GM12878 (cell line): ENCODE measurements at regions of chr2 and their contacts with region 1.

Region 1: GRCh38 chr2:65031341-65032018 is 24.7 kb upstream of the CEP68 start:
- DNase-seq: no peak
- ATAC-seq: peak; percentile 41
- H3K4me3 ChIP-seq: peak overlapping the region; percentile 46
- H3K27ac ChIP-seq: peak overlapping the region; percentile 73
- H3K4me1 ChIP-seq: peaks cover 51% of the 10 kb centered on the region
- H3K27me3 ChIP-seq: no peaks in the 10 kb centered on the region
- CTCF ChIP-seq: no peak
- EP300 ChIP-seq: no peak
- POLR2A ChIP-seq: no peak
- RAD21 ChIP-seq: no peak

Region 2: DNA sequence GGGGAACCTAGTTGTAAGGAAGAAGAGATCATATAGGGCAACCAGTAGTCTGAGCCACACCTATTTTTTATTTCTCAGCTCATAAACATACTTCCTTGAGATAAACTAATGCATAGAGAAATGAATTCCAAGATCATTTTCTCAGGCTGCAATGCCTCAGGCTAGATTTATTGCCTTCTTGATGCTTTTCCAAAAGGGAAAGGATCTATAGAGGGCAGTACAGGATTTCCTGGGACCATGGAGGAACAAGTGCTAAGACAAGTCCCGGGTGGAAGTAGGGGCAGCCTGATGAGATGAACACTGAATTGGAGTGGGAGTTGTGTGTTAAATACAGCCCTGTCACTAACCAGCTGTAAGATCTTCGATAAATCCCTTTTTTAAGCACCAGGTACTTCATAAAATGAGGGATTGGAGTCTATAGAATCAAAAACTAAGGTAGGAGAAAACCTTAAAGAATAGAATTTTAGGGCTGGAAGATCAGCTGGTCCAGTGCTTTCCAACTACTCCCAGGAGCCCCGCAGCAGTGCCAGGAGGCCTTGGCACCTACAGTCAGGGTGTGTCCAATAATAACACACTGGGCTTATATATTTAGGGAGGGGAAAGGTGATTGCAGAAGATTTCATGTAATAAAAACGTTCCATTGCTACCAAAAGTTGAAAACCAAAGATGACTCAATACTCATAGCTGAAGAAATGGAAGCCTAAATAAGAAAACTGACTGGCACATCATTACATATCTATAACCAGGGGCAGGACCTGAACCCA is 435.9 kb before region 1 on chr2:
- CTCF ChIA-PET with region 1: no interaction called
- POLR2A ChIA-PET with region 1: interaction called, 3 read pairs
- RAD21 ChIA-PET with region 1: interaction called, 3 read pairs
- SMC1A ChIA-PET with region 1: no interaction called
- in situ Hi-C with region 1: loop called (anchors 10 kb)
- intact Hi-C with region 1: no loop called
- DNase-seq: no peak
- ATAC-seq: no peak
- H3K4me3 ChIP-seq: no peak overlapping the region
- H3K27ac ChIP-seq: no peak overlapping the region
- H3K4me1 ChIP-seq: peaks cover 6% of the 10 kb centered on the region; the same call in 1 of the 2 replicates
- H3K27me3 ChIP-seq: no peaks in the 10 kb centered on the region
- CTCF ChIP-seq: peak in 1 of 3 experiments; percentile 34; a peak in 2 of 6 replicates
- EP300 ChIP-seq: no peak
- POLR2A ChIP-seq: no peak
- RAD21 ChIP-seq: no peak; the same call in 1 of the 2 replicates

Region 3: DNA sequence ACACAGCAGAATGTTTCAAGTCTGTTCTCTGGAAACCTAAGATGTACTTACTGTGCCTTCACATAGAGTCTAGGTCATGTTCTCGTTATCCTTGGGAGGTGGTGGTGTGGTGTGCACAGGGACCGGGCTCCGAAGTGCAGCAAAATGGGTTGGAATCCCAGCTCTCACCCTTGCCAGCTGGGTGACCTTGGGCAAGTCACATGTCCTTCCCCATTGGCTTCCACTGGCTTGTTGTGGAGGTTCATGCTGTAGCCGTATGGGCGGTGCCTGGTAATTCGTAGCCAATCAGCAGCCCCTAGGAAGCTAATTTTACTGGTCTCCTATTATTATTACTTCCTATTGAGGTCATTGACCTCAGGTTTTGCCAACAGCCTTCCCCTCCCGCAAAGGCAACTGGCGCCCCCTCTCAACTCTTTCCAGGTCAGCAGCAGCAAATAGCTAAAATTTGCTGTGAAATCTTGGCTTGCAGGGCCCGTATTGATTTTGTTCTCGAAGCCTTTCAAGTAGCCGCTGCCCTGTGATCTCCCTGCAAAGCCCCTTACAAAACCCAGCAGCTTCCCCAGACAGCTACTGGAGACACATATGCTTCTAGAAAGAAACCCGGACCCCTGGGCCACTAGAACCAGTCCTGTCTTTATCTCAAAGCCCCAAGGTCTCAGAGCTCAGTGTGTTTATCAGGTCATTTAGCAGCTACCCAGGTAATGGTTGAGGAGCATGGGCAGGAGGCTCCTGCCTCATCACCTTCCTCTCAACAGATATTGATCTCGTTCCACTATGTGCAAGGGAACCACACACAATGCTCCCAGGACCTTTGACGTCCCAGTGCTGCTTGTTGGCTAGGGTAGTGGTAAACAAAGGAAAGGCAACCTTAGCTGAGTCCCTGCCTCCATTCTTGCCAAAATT is 108.7 kb before region 1 on chr2:
- CTCF ChIA-PET with region 1: interaction called, 119 read pairs
- POLR2A ChIA-PET with region 1: interaction called, 45 read pairs
- RAD21 ChIA-PET with region 1: interaction called, 95 read pairs
- SMC1A ChIA-PET with region 1: interaction called, 178 read pairs
- in situ Hi-C with region 1: loop called (anchors 5 kb)
- intact Hi-C with region 1: loop called (anchors 1 kb)
- DNase-seq: no peak
- ATAC-seq: no peak
- H3K4me3 ChIP-seq: peak overlapping the region; percentile 23; the same call in 1 of the 2 replicates
- H3K27ac ChIP-seq: peak overlapping the region; percentile 23; the same call in 1 of the 2 replicates
- H3K4me1 ChIP-seq: peaks cover 42% of the 10 kb centered on the region
- H3K27me3 ChIP-seq: no peaks in the 10 kb centered on the region
- CTCF ChIP-seq: no peak
- EP300 ChIP-seq: no peak
- POLR2A ChIP-seq: no peak
- RAD21 ChIP-seq: peak; percentile 30; the same call in 1 of the 2 replicates

Region 4: DNA sequence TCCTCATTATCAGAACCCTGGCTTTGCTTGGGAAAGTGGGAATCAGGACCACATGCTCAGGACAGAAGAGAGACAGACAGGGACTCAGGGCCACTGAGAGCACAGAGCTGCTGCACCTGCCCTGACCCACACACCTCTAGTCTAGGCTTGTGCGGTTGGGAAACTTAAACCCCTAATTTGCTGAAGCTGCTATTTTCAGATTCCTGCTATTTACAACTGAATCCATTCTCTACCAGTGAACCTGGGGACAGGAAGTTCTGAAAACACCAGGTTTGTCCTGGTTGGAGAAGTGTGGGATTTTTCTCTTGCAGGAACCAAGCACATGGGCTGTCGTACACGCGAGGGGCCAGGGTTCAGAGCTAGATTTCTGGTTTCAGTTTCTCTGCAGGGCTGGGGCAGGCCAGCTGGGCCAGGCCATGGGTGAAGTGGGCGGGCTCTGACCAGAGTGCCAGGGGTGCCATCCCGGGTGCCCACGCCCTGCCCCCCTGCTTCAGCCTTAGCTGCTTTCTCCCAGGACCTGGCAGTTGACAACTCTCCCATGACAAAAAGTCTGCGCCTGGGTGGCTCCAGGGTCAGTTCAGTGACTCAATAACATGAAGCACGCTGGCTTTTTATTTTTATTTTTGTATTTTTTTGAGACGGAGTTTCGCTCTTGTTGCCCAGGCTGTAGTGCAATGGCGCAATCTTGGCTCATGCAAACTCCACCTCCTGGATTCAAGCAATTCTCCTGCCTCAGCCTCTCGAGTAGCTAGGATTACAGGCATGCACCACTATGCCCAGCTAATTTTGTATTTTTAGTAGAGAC is 93.6 kb before region 1 on chr2:
- CTCF ChIA-PET with region 1: interaction called, 16 read pairs
- POLR2A ChIA-PET with region 1: interaction called, 3 read pairs
- RAD21 ChIA-PET with region 1: interaction called, 26 read pairs
- SMC1A ChIA-PET with region 1: interaction called, 19 read pairs
- in situ Hi-C with region 1: no loop called
- intact Hi-C with region 1: loop called (anchors 5 kb)
- DNase-seq: peak; percentile 77
- ATAC-seq: peak; percentile 70
- H3K4me3 ChIP-seq: peak overlapping the region; percentile 76
- H3K27ac ChIP-seq: peak overlapping the region; percentile 92
- H3K4me1 ChIP-seq: peaks cover 67% of the 10 kb centered on the region
- H3K27me3 ChIP-seq: no peaks in the 10 kb centered on the region
- CTCF ChIP-seq: no peak
- EP300 ChIP-seq: peak in 1 of 2 experiments; percentile 12; a peak in 1 of 4 replicates
- POLR2A ChIP-seq: peak; percentile 60
- RAD21 ChIP-seq: no peak

Region 5: GRCh38 chr2:64978514-64979268 is 52.8 kb before region 1 on chr2:
- CTCF ChIA-PET with region 1: interaction called, 5 read pairs
- POLR2A ChIA-PET with region 1: interaction called, 6 read pairs
- RAD21 ChIA-PET with region 1: interaction called, 10 read pairs
- SMC1A ChIA-PET with region 1: interaction called, 13 read pairs
- in situ Hi-C with region 1: no loop called
- intact Hi-C with region 1: no loop called
- DNase-seq: no peak
- ATAC-seq: peak; percentile 71
- H3K4me3 ChIP-seq: no peak overlapping the region
- H3K27ac ChIP-seq: no peak overlapping the region
- H3K4me1 ChIP-seq: peaks cover 25% of the 10 kb centered on the region
- H3K27me3 ChIP-seq: no peaks in the 10 kb centered on the region
- CTCF ChIP-seq: peak; percentile 29 to 36 (median 31); a peak in 4 of 6 replicates
- EP300 ChIP-seq: no peak
- POLR2A ChIP-seq: no peak
- RAD21 ChIP-seq: peak; percentile 36

Region 6: GRCh38 chr2:64998658-64999061 is 32.8 kb before region 1 on chr2:
- CTCF ChIA-PET with region 1: interaction called, 5 read pairs
- POLR2A ChIA-PET with region 1: interaction called, 8 read pairs
- RAD21 ChIA-PET with region 1: interaction called, 4 read pairs
- SMC1A ChIA-PET with region 1: interaction called, 31 read pairs
- in situ Hi-C with region 1: no loop called
- intact Hi-C with region 1: no loop called
- DNase-seq: no peak
- ATAC-seq: no peak
- H3K4me3 ChIP-seq: no peak overlapping the region
- H3K27ac ChIP-seq: no peak overlapping the region
- H3K4me1 ChIP-seq: no peaks in the 10 kb centered on the region
- H3K27me3 ChIP-seq: no peaks in the 10 kb centered on the region
- CTCF ChIP-seq: no peak
- EP300 ChIP-seq: no peak
- POLR2A ChIP-seq: no peak
- RAD21 ChIP-seq: no peak

Region 7: DNA sequence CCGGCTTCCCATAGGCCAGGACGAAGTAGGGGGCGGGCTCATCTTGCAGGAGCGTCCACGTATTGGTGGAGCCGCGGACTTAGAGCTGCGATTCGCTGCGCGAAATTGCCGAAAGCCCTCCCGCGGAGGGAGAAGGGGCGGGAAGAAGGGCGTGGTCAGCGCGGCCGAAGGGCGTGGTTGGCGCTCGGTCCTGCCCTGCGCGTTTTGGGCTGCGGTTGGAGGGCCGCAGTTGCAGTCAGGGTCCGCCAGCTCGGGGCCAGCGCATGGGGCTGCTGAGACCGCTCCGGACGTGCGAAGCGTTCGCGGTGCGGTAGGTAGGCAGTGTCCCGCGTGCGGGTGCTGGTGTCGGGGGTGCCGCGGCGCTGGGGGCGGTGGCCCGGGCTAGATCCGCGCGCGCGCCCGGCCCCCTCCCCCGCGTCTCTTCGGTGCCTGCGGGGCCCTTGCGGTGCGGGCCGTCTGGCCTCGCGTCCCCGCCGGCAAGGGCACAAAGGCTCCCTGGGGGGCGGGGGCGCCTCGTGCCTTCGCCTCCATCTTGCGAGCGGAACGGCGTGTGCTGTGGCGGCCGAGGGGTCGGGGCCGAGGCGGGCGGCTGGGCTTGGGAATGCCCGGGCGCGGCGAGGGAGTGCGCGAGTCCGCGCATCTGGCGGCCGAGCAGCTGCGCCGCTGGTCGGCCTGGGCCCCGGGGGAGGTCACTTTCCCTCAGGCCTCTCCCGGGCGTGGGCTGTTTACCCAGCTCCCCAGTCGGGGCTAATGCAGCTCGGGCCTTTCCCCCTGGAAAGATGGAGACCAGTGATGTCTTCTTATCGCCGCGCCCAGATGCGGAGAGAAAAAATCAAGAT is 25.0 kb after region 1 on chr2 and contains the start of gene CEP68:
- CTCF ChIA-PET with region 1: interaction called, 7 read pairs
- POLR2A ChIA-PET with region 1: interaction called, 7 read pairs
- RAD21 ChIA-PET with region 1: interaction called, 5 read pairs
- SMC1A ChIA-PET with region 1: interaction called, 27 read pairs
- in situ Hi-C with region 1: no loop called
- intact Hi-C with region 1: no loop called
- DNase-seq: peak; percentile 90
- ATAC-seq: peak; percentile 90
- H3K4me3 ChIP-seq: peak within 1 kb of the TSS; percentile 74
- H3K27ac ChIP-seq: peak within 1 kb of the TSS; percentile 63
- H3K4me1 ChIP-seq: peaks cover 46% of the 10 kb centered on the region
- H3K27me3 ChIP-seq: no peaks in the 10 kb centered on the region
- CTCF ChIP-seq: no peak
- EP300 ChIP-seq: no peak
- POLR2A ChIP-seq: peak; percentile 92
- RAD21 ChIP-seq: no peak
- polyA plus RNA-seq, gene CEP68: 1.1 to 2.2 TPM

Region 8: DNA sequence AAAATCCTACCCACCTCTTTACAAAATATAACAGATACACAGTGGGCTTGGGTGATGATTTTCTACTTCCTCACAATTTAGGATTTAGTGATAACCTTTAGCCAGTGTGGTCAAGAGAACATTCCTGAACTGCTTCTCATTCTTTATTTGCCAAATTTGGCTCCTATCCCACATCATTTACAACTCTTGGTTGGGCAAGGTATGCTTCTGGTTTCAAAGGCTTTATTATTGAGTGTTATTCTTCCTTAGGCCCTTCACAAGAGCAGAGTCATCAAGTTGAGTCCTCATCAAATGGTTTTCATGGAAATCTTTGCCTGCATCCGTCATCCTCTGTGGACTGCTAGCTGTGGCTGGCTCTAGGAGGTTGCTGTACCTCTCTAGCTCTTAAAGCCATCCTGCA is 1893.6 kb after region 1 on chr2:
- CTCF ChIA-PET with region 1: no interaction called
- POLR2A ChIA-PET with region 1: no interaction called
- RAD21 ChIA-PET with region 1: no interaction called
- SMC1A ChIA-PET with region 1: no interaction called
- in situ Hi-C with region 1: no loop called
- intact Hi-C with region 1: no loop called
- DNase-seq: no peak
- ATAC-seq: no peak
- H3K4me3 ChIP-seq: no peak overlapping the region
- H3K27ac ChIP-seq: no peak overlapping the region
- H3K4me1 ChIP-seq: no peaks in the 10 kb centered on the region
- H3K27me3 ChIP-seq: no peaks in the 10 kb centered on the region
- CTCF ChIP-seq: no peak
- EP300 ChIP-seq: no peak
- POLR2A ChIP-seq: no peak
- RAD21 ChIP-seq: no peak